Activated CD4-positive, alpha-beta T cell treated with anti-CD3 and anti-CD28 coated beads, Interleukin-2, amount 10 ng/mL, durations not matched to agents 24 days and 14 days (primary cell): ENCODE measurements at regions of chr12 and their contacts with region 1.

Region 1: DNA sequence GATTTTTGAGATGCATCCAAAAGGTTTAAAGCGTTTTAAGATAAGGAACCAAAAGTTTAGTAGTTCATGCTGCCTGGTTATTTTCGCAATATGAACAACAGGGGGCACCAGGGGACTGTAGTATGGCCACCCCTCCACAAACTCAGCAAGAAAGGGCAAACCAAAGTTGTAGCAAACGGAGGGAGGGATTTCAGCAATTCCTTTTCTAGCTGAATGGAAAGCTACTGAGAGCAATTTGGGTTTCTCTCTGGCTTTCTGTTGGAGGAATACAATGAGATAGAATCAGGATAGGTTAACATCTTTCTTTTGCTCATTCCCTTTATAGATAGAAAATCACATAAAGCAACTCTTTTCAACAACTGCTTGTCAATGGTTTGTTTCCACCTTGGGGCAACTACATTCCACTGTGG is 62.5 kb downstream of the DRAM1 start:
- DNase-seq: peak; percentile 89
- H3K4me3 Mint-ChIP-seq: no peak overlapping the region
- H3K27ac Mint-ChIP-seq: no peak overlapping the region
- H3K4me1 Mint-ChIP-seq: peaks cover 24% of the 10 kb centered on the region
- H3K27me3 Mint-ChIP-seq: peaks cover 6% of the 10 kb centered on the region

Region 2: GRCh38 chr12:101915856-101916255 is 24.0 kb before region 1 on chr12:
- intact Hi-C with region 1: loop called (anchors 2 kb)
- DNase-seq: no peak
- H3K4me3 Mint-ChIP-seq: no peak overlapping the region
- H3K27ac Mint-ChIP-seq: no peak overlapping the region
- H3K4me1 Mint-ChIP-seq: peaks cover 5% of the 10 kb centered on the region
- H3K27me3 Mint-ChIP-seq: no peaks in the 10 kb centered on the region

Region 3: DNA sequence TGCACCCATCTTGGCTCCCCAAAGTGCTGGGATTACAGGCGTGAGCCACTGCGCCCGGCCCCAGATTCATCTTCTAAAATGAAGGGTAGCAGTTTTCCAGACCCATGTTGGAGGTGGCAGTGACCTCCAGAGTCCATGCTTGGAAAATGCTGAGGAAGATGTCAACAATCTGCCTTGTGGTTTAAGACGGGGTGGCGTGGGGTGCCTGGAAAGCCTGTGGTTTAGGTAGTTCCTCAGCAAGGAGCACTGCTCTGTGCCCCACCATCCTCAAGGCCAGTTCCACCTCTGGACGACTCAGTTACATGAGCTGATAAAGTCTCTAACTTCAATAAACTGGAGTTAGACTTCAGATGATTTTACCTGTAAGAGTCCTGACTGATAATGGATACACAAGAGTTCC is 13.9 kb before region 1 on chr12:
- intact Hi-C with region 1: no loop called
- DNase-seq: no peak
- H3K4me3 Mint-ChIP-seq: no peak overlapping the region
- H3K27ac Mint-ChIP-seq: no peak overlapping the region
- H3K4me1 Mint-ChIP-seq: peaks cover 4% of the 10 kb centered on the region
- H3K27me3 Mint-ChIP-seq: peaks cover 6% of the 10 kb centered on the region

Region 4: DNA sequence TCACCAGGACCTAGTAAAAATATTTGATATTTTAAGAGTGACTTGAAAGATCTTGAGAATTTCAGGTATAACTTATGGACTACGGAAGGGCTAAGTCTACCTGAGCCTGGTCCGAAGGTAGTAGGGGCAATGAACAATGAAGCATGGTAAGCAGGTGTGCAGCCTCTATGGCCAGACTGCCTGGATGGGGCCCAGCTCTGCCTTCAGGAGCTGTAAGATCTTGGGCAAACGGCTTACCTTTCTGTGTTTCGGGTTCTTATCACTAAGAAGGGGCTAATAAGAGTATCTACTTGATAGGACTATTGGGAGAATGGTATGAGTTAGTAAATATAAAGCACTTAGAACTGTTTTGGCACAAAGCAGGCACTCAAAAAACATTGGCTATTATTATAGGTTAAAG is 141.0 kb after region 1 on chr12:
- intact Hi-C with region 1: no loop called
- DNase-seq: no peak
- H3K4me3 Mint-ChIP-seq: no peak overlapping the region
- H3K27ac Mint-ChIP-seq: no peak overlapping the region
- H3K4me1 Mint-ChIP-seq: peaks cover 1% of the 10 kb centered on the region
- H3K27me3 Mint-ChIP-seq: no peaks in the 10 kb centered on the region

Region 5: GRCh38 chr12:102197789-102198188 is 257.9 kb after region 1 on chr12 and contains the start of gene PMCH:
- intact Hi-C with region 1: loop called (anchors 1 kb)
- DNase-seq: no peak
- H3K4me3 Mint-ChIP-seq: peak within 1 kb of the TSS; percentile 35
- H3K27ac Mint-ChIP-seq: peak within 1 kb of the TSS; percentile 87
- H3K4me1 Mint-ChIP-seq: peaks cover 17% of the 10 kb centered on the region
- H3K27me3 Mint-ChIP-seq: no peaks in the 10 kb centered on the region
- total RNA-seq, gene PMCH: 6.3 and 8.4 TPM in 2 replicates

Region 6: GRCh38 chr12:102702447-102703114 is 762.7 kb after region 1 on chr12:
- intact Hi-C with region 1: loop called (anchors 1 kb)
- DNase-seq: peak; percentile 78
- H3K4me3 Mint-ChIP-seq: no peak overlapping the region
- H3K27ac Mint-ChIP-seq: no peak overlapping the region
- H3K4me1 Mint-ChIP-seq: no peaks in the 10 kb centered on the region
- H3K27me3 Mint-ChIP-seq: peaks cover 22% of the 10 kb centered on the region

Region 7: GRCh38 chr12:102769319-102769916 is 829.6 kb after region 1 on chr12:
- intact Hi-C with region 1: loop called (anchors 1 kb)
- DNase-seq: peak; percentile 81
- H3K4me3 Mint-ChIP-seq: no peak overlapping the region
- H3K27ac Mint-ChIP-seq: no peak overlapping the region
- H3K4me1 Mint-ChIP-seq: no peaks in the 10 kb centered on the region
- H3K27me3 Mint-ChIP-seq: peaks cover 12% of the 10 kb centered on the region